OCI-LY7 (cell line): ENCODE measurements at regions of chrX and their contacts with region 1.

Region 1: DNA sequence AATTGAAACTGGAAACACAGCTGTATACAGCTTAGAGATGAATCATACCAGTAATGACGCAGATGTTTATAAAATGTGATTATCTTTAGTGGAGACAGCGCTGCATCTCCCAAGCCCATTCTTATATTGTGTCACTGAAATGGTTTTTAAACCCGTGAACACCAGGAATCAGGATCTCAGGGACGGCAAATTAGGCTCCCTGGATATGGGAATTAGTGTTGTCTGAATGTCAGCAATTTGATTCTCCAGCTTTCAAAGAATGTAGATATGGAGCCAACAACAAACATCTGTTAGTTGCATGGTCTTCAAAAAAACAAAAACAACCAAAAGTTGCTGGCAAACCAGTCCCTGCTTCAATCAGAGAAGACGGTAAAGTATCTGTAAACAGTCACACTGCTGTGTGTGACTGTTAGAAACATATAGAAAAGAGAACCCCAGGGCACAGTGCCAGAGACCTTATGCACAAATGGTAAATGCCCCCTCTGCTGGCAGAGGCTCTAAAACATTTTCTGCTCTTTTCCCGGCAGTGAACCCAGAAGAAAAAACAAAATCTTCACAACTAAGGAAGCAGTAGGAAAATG is 351.9 kb upstream of the FTHL17 start:
- DNase-seq: peak; percentile 32
- H3K4me3 ChIP-seq: no peak overlapping the region
- H3K27ac ChIP-seq: no peak overlapping the region
- H3K4me1 ChIP-seq: no peaks in the 10 kb centered on the region
- CTCF ChIP-seq: peak; percentile 64

Region 2: GRCh38 chrX:31036895-31037294 is 386.8 kb before region 1 on chrX:
- CTCF ChIA-PET with region 1: interaction called, 4 read pairs
- POLR2A ChIA-PET with region 1: interaction called, 4 read pairs
- intact Hi-C with region 1: loop called (anchors 1 kb)
- DNase-seq: peak; percentile 54
- H3K4me3 ChIP-seq: no peak overlapping the region
- H3K27ac ChIP-seq: no peak overlapping the region
- H3K4me1 ChIP-seq: peaks cover 24% of the 10 kb centered on the region
- CTCF ChIP-seq: peak; percentile 77

Region 3: DNA sequence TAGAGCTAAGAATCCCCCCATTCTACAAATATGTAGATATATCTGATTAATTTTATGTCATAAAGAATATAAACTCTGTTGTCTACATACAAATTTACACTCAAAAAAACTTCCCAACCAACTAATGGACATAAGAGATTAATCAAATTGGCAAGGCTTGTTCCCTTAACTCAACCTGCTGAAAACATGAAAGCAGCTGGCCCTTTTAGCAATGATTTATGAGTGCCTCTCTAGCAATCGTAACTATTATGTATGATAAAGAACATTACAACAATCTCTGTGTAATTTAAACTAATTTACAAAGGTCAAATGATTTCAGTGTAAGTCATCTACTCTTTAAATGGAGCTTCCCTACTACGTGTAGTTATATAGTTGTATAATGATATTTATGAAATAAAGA is 268.8 kb before region 1 on chrX:
- CTCF ChIA-PET with region 1: no interaction called
- POLR2A ChIA-PET with region 1: no interaction called
- intact Hi-C with region 1: no loop called
- DNase-seq: no peak
- H3K4me3 ChIP-seq: no peak overlapping the region
- H3K27ac ChIP-seq: no peak overlapping the region
- H3K4me1 ChIP-seq: no peaks in the 10 kb centered on the region
- CTCF ChIP-seq: no peak

Region 4: GRCh38 chrX:31266172-31267076 is 157.3 kb before region 1 on chrX:
- CTCF ChIA-PET with region 1: no interaction called
- POLR2A ChIA-PET with region 1: no interaction called
- intact Hi-C with region 1: loop called (anchors 5 kb)
- DNase-seq: peak; percentile 68
- H3K4me3 ChIP-seq: peak overlapping the region; percentile 96
- H3K27ac ChIP-seq: peak overlapping the region; percentile 35
- H3K4me1 ChIP-seq: peaks cover 19% of the 10 kb centered on the region
- CTCF ChIP-seq: no peak

Region 5: DNA sequence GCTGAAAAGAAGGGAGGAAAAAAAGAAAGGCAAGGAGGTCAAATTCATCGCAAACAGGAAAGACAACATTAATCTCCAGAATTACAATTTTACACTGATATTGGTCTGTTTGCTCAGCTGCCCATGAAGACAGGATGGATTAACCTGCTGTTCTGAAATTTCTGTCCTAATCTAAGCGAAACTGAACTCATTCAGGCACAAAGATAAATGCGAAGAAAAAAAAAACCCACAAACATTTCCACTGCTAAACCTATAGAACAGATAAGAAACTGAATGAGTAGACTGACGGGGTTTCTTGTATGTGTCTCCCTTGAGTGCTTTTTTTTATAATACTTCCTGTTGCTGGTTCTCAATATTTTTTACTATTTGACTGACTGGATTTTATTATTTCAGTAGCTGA is 100.0 kb before region 1 on chrX:
- CTCF ChIA-PET with region 1: no interaction called
- POLR2A ChIA-PET with region 1: interaction called, 4 read pairs
- intact Hi-C with region 1: loop called (anchors 5 kb)
- DNase-seq: no peak
- H3K4me3 ChIP-seq: no peak overlapping the region
- H3K27ac ChIP-seq: peak overlapping the region; percentile 5
- H3K4me1 ChIP-seq: no peaks in the 10 kb centered on the region
- CTCF ChIP-seq: no peak

Region 6: GRCh38 chrX:31658360-31658759 is 234.7 kb after region 1 on chrX:
- CTCF ChIA-PET with region 1: no interaction called
- POLR2A ChIA-PET with region 1: no interaction called
- intact Hi-C with region 1: loop called (anchors 10 kb)
- DNase-seq: peak; percentile 31
- H3K4me3 ChIP-seq: no peak overlapping the region
- H3K27ac ChIP-seq: no peak overlapping the region
- H3K4me1 ChIP-seq: no peaks in the 10 kb centered on the region
- CTCF ChIP-seq: peak; percentile 81